CD4-positive, alpha-beta T cell (primary cell): ENCODE measurements at regions of chr12 and their contacts with region 1.

Region 1: DNA sequence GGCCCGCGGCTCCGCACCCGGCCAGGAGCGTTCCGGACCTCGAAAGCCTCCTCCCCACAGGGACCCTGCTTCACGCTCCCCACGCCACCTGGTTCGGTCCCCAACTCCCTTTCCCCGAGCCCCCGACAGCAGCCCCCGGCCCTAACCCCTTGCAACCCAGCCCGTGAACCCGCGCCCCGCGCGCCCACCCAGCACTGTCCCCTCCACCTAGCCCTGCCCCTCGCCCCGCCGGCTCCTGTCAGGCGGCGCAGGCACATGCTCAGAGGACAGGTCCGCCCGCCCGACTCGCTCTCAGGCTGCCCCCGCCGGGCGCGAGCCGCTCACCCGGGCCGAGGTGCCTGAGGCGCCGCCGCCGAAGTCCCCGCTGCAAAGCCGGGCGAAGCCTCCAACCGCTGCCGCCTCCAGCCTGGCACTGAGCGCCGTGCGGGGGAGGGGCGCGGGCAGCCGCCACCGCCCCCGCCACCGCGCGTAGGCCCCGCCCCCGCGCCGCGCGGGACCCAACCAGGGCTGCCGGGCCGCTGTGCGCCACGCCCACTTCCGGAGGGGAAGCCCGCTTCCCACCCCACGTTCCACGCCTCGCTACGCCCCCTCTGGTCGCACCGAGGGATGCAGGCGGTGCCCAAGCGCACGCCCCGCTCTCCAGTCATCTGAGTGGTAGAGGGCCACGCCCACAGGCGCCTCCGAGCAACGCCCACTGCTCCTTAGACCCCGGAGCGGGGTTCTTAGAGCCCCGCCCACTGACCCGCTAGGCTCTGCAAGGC is at the start of gene CORO1C:
- DNase-seq: peak; percentile 88 to 99 (median 92)
- ATAC-seq: peak; percentile 73
- H3K4me3 ChIP-seq: peak within 1 kb of the TSS; percentile 93
- H3K4me3 Mint-ChIP-seq: peak within 1 kb of the TSS; percentile 97
- H3K27ac ChIP-seq: peak within 1 kb of the TSS; percentile 75 to 90
- H3K27ac Mint-ChIP-seq: peak within 1 kb of the TSS; percentile 88
- H3K4me1 ChIP-seq: peaks cover 26% of the 10 kb centered on the region
- H3K4me1 Mint-ChIP-seq: peaks cover 26% of the 10 kb centered on the region
- H3K27me3 ChIP-seq: no peaks in the 10 kb centered on the region
- H3K27me3 Mint-ChIP-seq: no peaks in the 10 kb centered on the region
- CTCF ChIP-seq: peak; percentile 75
- total RNA-seq, gene CORO1C: 6.7 to 7.4 TPM

Region 2: GRCh38 chr12:108691175-108691997 is 39.9 kb before region 1 on chr12:
- CTCF ChIA-PET with region 1: interaction called, 3 read pairs
- POLR2A ChIA-PET with region 1: interaction called, 5 read pairs
- intact Hi-C with region 1: loop called (anchors 2 to 5 kb)
- DNase-seq: peak; percentile 17 to 87 (median 58)
- ATAC-seq: peak; percentile 74
- H3K4me3 ChIP-seq: peak overlapping the region; percentile 32
- H3K4me3 Mint-ChIP-seq: peak overlapping the region; percentile 70
- H3K27ac ChIP-seq: peak overlapping the region in 1 of 2 donors; percentile 50
- H3K27ac Mint-ChIP-seq: peak overlapping the region; percentile 77
- H3K4me1 ChIP-seq: peaks cover 41% of the 10 kb centered on the region
- H3K4me1 Mint-ChIP-seq: peaks cover 58% of the 10 kb centered on the region
- H3K27me3 ChIP-seq: no peaks in the 10 kb centered on the region
- H3K27me3 Mint-ChIP-seq: no peaks in the 10 kb centered on the region
- CTCF ChIP-seq: no peak

Region 3: GRCh38 chr12:109098183-109099050 is 367.1 kb after region 1 on chr12:
- CTCF ChIA-PET with region 1: no interaction called
- POLR2A ChIA-PET with region 1: no interaction called
- intact Hi-C with region 1: loop called in 1 of 2 experiments (anchors 5 kb)
- DNase-seq: peak in 4 of 14 experiments; percentile 22 to 63 (median 42)
- ATAC-seq: peak; percentile 13
- H3K4me3 ChIP-seq: peak overlapping the region; percentile 92
- H3K4me3 Mint-ChIP-seq: peak overlapping the region; percentile 94
- H3K27ac ChIP-seq: peak overlapping the region; percentile 6 to 43
- H3K27ac Mint-ChIP-seq: peak overlapping the region; percentile 70
- H3K4me1 ChIP-seq: peaks cover 38% of the 10 kb centered on the region
- H3K4me1 Mint-ChIP-seq: peaks cover 43% of the 10 kb centered on the region
- H3K27me3 ChIP-seq: no peaks in the 10 kb centered on the region
- H3K27me3 Mint-ChIP-seq: no peaks in the 10 kb centered on the region
- CTCF ChIP-seq: no peak